ENCODE measurements at regions of chr4 and their contacts with region 1.

Region 1: GRCh38 chr4:98383431-98384106 is 122.4 kb downstream of the RAP1GDS1 start:
- DNase-seq: no peak
- H3K4me3 ChIP-seq: no peak overlapping the region
- H3K27ac ChIP-seq: no peak overlapping the region
- H3K4me1 ChIP-seq: no peaks in the 10 kb centered on the region
- H3K27me3 ChIP-seq: no peaks in the 10 kb centered on the region
- CTCF ChIP-seq: no peak

Region 2: GRCh38 chr4:97762115-97762512 is 621.5 kb before region 1 on chr4:
- CTCF ChIA-PET with region 1: no interaction called
- dilution Hi-C with region 1: no loop called
- in situ Hi-C with region 1: no loop called
- intact Hi-C with region 1: no loop called
- DNase-seq: no peak
- H3K4me3 ChIP-seq: no peak overlapping the region
- H3K27ac ChIP-seq: no peak overlapping the region
- H3K4me1 ChIP-seq: no peaks in the 10 kb centered on the region
- H3K27me3 ChIP-seq: no peaks in the 10 kb centered on the region
- CTCF ChIP-seq: no peak

Region 3: GRCh38 chr4:98166025-98166730 is 217.4 kb before region 1 on chr4:
- CTCF ChIA-PET with region 1: no interaction called
- dilution Hi-C with region 1: no loop called
- in situ Hi-C with region 1: no loop called
- intact Hi-C with region 1: loop called (anchors 10 kb)
- DNase-seq: peak; percentile 84
- H3K4me3 ChIP-seq: no peak overlapping the region
- H3K27ac ChIP-seq: no peak overlapping the region
- H3K4me1 ChIP-seq: peaks cover 12% of the 10 kb centered on the region
- H3K27me3 ChIP-seq: no peaks in the 10 kb centered on the region
- CTCF ChIP-seq: no peak

Region 4: DNA sequence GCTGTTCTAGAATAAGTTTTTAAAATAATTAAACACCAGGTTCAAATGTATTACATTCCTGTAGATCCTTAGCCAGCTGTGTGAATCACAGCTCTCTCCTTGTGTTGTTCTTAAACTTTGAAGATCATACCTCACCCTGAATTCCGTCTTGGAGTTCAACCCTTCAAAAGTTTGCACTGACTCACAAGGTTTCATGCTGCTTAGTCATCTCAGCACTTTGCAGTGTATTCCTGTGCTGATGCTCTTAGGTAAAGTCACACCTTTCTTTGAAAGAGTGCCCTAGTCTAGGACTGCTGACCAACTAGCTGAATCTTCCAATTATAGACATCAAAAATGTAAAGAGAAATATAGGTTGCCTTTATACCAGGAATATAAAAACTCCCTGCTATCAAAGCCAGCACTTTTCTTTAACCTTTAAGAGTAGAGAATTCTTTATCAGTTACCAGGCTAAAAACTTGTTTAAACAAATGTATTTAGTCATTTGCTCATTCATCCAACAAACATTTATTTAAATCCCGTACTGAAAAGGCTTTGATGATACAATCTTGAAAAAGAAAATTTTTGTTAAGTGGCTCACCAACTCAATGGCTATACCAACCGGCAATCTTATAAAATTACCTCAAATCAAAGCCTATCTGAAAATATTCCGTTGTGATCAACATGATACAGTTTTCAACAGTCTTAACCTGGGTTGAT is 47.3 kb after region 1 on chr4:
- CTCF ChIA-PET with region 1: no interaction called
- dilution Hi-C with region 1: no loop called
- in situ Hi-C with region 1: no loop called
- intact Hi-C with region 1: no loop called
- DNase-seq: peak; percentile 96
- H3K4me3 ChIP-seq: peak overlapping the region in 1 of 3 experiments; percentile 3
- H3K27ac ChIP-seq: peak overlapping the region; percentile 93
- H3K4me1 ChIP-seq: peaks cover 40% of the 10 kb centered on the region
- H3K27me3 ChIP-seq: no peaks in the 10 kb centered on the region
- CTCF ChIP-seq: no peak